ENCODE measurements at regions of chr1 and their contacts with region 1.

Region 1: DNA sequence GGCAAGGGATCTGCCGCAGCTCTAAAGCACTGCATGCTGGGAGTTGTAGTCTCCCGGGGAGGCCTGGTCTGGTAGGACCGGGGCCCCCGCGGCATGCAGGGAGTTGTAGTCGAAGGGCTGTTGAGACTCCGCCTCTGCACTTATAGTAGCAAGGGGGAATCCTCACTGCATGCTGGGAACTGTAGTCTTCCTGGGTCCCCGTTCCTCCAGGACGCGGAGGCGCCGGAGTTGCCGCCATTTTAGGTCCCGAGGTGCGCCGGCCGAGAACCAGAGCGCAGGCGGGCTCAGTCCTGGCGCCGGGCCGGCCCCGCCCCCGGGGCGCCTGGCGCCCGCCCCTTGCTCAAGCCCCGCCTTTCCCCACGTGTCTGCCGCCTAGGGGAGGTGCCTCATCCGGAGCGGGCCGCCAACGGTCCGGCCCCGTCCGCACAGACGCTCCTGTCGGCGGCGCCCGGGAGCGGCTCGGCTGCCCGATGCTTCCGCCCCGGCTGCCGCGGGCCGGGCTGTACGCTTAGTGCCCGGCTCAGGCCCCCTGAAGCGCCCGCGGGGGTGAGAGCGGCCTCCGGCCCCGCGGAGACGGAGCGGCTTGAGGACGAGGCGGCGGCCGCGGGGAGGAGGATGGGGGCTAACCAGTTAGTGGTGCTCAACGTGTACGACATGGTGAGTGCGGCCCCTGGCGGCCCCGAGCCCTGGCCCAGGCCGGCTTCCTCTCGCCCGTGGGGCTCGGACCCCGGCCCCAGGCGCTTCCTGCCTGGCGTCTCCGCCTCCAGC is at the start of gene DESI2:
- DNase-seq: peak; percentile 99
- ATAC-seq: peak; percentile 97
- H3K4me3 ChIP-seq: peak within 1 kb of the TSS; percentile 69 to 94 (median 94)
- H3K27ac ChIP-seq: peak within 1 kb of the TSS; percentile 83
- H3K4me1 ChIP-seq: peaks cover 27% of the 10 kb centered on the region
- H3K27me3 ChIP-seq: no peaks in the 10 kb centered on the region; a peak in 1 of 5 replicates
- CTCF ChIP-seq: peak; percentile 71
- EP300 ChIP-seq: peak in 1 of 2 experiments; percentile 42; a peak in 2 of 4 replicates
- POLR2A ChIP-seq: peak; percentile 87 to 88
- RAD21 ChIP-seq: peak; percentile 67
- total RNA-seq, gene DESI2: 42.2 and 62.0 TPM in 2 replicates

Region 2: GRCh38 chr1:244599937-244600350 is 52.9 kb before region 1 on chr1:
- CTCF ChIA-PET with region 1: interaction called, 7 read pairs
- POLR2A ChIA-PET with region 1: no interaction called
- in situ Hi-C with region 1: no loop called
- intact Hi-C with region 1: loop called (anchors 5 kb)
- DNase-seq: peak; percentile 16
- ATAC-seq: no peak
- H3K4me3 ChIP-seq: no peak overlapping the region
- H3K27ac ChIP-seq: no peak overlapping the region
- H3K4me1 ChIP-seq: no peaks in the 10 kb centered on the region
- H3K27me3 ChIP-seq: 0 out of 5 replicates have a peak, but pooled peaks cover 0 to 10% of the 10 kb centered on the region in 2 experiments
- CTCF ChIP-seq: no peak
- EP300 ChIP-seq: no peak; a peak in 1 of 4 replicates
- POLR2A ChIP-seq: no peak
- RAD21 ChIP-seq: no peak